Activated T-helper 1 cell treated with anti-CD3 and anti-CD28 coated beads, Interleukin-12 subunit alpha, Interleukin-12 subunit beta, Interleukin-2, Interleukin-4 antibody, amounts not matched to agents 30 ng/mL and 10 ng/mL and 1 ng/mL, durations not matched to agents 14 hours and 24 hours and 36 hours (primary cell): ENCODE measurements at regions of chr15 and their contacts with region 1.

Region 1: GRCh38 chr15:43204016-43204901 is 16.6 kb downstream of the EPB42 start:
- DNase-seq: peak; percentile 24
- H3K4me3 Mint-ChIP-seq: no peak overlapping the region
- H3K27ac Mint-ChIP-seq: no peak overlapping the region
- H3K4me1 Mint-ChIP-seq: peaks cover 17% of the 10 kb centered on the region
- H3K27me3 Mint-ChIP-seq: peaks cover 6% of the 10 kb centered on the region

Region 2: GRCh38 chr15:42704492-42704926 is 499.8 kb before region 1 on chr15:
- intact Hi-C with region 1: loop called (anchors 1 kb)
- DNase-seq: peak; percentile 45
- H3K4me3 Mint-ChIP-seq: no peak overlapping the region
- H3K27ac Mint-ChIP-seq: no peak overlapping the region
- H3K4me1 Mint-ChIP-seq: peaks cover 6% of the 10 kb centered on the region
- H3K27me3 Mint-ChIP-seq: no peaks in the 10 kb centered on the region

Region 3: DNA sequence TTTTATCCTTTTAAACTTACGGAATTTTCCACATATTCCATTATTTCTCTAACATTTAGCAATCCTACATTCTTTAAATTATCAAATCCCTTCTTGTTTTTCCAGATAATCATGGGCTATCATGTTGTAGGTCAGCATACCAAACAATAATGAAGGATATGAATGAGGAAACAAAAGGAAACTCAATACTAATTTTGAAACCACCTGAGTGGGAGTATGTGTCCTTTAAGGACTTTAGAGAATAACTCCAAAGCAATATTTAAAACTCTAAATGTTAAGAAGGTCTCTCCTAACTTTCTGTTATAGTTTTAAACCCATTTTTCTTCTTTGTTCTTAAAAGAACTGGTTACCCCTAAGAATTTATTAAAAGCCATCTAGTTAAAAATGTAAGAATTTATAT is 245.7 kb after region 1 on chr15:
- intact Hi-C with region 1: no loop called
- DNase-seq: no peak
- H3K4me3 Mint-ChIP-seq: no peak overlapping the region
- H3K27ac Mint-ChIP-seq: no peak overlapping the region
- H3K4me1 Mint-ChIP-seq: peaks cover 16% of the 10 kb centered on the region
- H3K27me3 Mint-ChIP-seq: no peaks in the 10 kb centered on the region

Region 4: DNA sequence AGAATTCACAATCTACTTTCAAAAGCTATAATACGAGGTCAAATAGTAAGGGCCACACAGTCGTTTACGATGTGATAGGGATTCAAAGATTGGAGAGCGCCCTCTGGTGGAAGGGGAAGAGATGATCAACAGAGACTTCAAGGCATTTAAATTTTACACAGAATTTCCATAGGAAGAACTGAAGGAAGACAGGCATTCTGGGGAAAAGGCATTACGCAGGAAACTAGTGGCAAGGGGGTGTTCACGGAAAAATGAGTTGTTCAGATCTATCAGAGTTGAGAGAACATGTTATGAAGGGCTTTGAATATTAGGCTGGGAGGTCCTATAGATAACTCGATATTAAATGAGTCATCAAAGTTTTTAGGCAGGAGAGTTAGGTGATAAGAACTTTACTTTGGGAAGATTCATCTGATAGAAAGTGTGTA is 862.1 kb after region 1 on chr15:
- intact Hi-C with region 1: no loop called
- DNase-seq: peak; percentile 40
- H3K4me3 Mint-ChIP-seq: no peak overlapping the region
- H3K27ac Mint-ChIP-seq: no peak overlapping the region
- H3K4me1 Mint-ChIP-seq: peaks cover 7% of the 10 kb centered on the region
- H3K27me3 Mint-ChIP-seq: peaks cover 12% of the 10 kb centered on the region